PC-9 (cell line): ENCODE measurements at regions of chr18 and their contacts with region 1.

Region 1: GRCh38 chr18:12744103-12744502 is 41.3 kb downstream of the PSMG2 start:
- DNase-seq: peak in 1 of 2 experiments; percentile 54
- H3K4me3 ChIP-seq: no peak overlapping the region
- H3K27ac ChIP-seq: no peak overlapping the region
- H3K4me1 ChIP-seq: peaks cover 34% of the 10 kb centered on the region
- H3K27me3 ChIP-seq: no peaks in the 10 kb centered on the region
- CTCF ChIP-seq: peak; percentile 68

Region 2: DNA sequence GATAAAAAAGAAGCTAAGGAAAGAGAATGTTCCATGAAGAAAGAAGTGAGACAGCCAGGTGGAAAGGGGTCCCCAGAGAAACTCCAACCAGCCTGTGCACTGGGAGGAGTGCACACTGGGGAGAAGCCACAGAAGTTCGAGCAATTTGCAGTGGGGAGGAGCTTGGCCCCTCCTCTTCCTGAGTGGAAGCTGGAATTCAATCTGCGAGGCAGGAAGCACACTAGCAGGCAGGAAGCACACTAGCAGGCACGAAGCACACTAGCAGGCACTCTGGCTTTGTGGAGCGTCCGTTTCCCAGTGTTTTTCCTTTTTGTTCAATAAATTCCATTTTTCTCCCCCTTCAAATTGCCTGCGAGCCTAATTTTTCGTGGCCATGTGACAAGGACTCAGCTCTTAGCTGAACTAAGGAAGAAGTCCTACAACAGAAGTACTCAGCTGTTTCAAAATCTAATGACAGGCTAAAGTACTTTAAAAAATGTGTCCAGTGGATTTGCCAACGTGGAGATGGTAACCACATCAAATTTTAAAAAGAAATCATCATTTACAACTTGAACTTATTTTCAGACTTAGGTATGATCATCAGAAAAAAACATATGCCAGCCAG is 64.8 kb before region 1 on chr18:
- CTCF ChIA-PET with region 1: no interaction called
- POLR2A ChIA-PET with region 1: no interaction called
- intact Hi-C with region 1: no loop called
- DNase-seq: no peak
- H3K4me3 ChIP-seq: no peak overlapping the region
- H3K27ac ChIP-seq: no peak overlapping the region
- H3K4me1 ChIP-seq: no peaks in the 10 kb centered on the region
- H3K27me3 ChIP-seq: no peaks in the 10 kb centered on the region
- CTCF ChIP-seq: no peak

Region 3: DNA sequence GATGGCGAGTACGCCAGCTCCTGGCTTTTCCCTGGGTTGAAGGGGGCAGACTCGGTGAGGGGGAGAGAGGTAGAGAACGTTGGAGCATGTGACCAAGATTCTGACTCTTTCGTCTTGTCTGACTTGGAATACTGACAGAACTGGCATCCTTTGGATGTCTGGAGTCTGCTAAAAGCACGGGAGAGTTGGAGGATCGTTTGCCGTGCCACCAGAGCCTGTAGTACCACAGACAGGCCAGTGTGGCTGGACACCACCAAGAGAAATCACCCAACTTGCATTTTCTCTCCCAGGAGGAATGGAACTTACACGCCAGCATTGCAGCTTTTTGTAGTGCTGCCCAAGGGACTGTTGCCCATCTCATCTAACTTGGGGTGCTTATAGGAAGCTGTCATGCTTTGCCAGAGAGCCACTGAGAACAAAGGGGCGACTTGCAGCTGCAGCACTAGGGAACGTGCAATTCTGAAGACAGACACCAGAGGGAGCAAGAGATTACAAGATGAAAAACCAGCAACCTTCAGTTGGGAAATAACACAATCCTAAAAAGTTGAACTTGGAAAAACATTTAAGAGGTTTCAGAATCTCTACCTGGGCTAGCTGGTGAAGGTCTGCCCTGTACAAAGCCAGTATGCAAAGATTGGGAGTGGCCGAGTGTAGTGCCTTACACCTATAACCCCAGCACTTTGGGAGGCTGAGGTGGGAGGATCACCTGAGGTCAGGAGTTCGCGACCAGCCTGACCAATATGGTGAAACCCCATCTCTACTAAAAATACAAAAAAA is 17.1 kb before region 1 on chr18:
- CTCF ChIA-PET with region 1: no interaction called
- POLR2A ChIA-PET with region 1: no interaction called
- intact Hi-C with region 1: loop called (anchors 1 kb)
- DNase-seq: peak; percentile 46 to 68
- H3K4me3 ChIP-seq: no peak overlapping the region
- H3K27ac ChIP-seq: no peak overlapping the region
- H3K4me1 ChIP-seq: peaks cover 17% of the 10 kb centered on the region
- H3K27me3 ChIP-seq: no peaks in the 10 kb centered on the region
- CTCF ChIP-seq: peak; percentile 97

Region 4: GRCh38 chr18:12838178-12838634 is 94.1 kb after region 1 on chr18:
- CTCF ChIA-PET with region 1: no interaction called
- POLR2A ChIA-PET with region 1: no interaction called
- intact Hi-C with region 1: loop called (anchors 5 kb)
- DNase-seq: peak; percentile 92 to 99
- H3K4me3 ChIP-seq: peak overlapping the region; percentile 45; the same call in 1 of the 2 replicates
- H3K27ac ChIP-seq: peak overlapping the region; percentile 100
- H3K4me1 ChIP-seq: peaks cover 53% of the 10 kb centered on the region
- H3K27me3 ChIP-seq: no peaks in the 10 kb centered on the region
- CTCF ChIP-seq: no peak

Region 5: DNA sequence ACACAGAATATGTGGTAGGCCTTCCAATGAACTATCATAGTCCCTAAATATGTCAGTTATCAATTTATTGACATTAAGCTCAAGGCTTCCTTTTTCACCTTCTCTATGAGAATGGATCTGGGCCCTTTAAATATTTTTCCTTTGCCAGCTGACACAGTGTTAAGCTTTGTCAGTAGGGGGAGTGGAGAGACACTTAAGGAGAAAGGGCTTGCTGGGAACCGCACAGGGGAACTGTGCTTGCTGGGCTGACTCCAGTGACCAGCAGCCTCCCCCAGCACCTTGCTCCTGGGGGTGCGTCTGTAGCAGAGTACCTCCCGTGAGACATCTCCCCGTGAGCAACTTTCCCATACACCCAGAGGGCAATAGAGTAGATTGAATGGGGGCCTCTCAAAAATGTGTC is 146.4 kb after region 1 on chr18:
- CTCF ChIA-PET with region 1: interaction called, 13 read pairs
- POLR2A ChIA-PET with region 1: interaction called, 13 read pairs
- intact Hi-C with region 1: loop called (anchors 1 kb)
- DNase-seq: peak; percentile 22 to 59
- H3K4me3 ChIP-seq: peak overlapping the region; percentile 6; the same call in 1 of the 2 replicates
- H3K27ac ChIP-seq: peak overlapping the region; percentile 95
- H3K4me1 ChIP-seq: peaks cover 41% of the 10 kb centered on the region
- H3K27me3 ChIP-seq: no peaks in the 10 kb centered on the region
- CTCF ChIP-seq: peak; percentile 45; the same call in 1 of the 2 replicates

Region 6: DNA sequence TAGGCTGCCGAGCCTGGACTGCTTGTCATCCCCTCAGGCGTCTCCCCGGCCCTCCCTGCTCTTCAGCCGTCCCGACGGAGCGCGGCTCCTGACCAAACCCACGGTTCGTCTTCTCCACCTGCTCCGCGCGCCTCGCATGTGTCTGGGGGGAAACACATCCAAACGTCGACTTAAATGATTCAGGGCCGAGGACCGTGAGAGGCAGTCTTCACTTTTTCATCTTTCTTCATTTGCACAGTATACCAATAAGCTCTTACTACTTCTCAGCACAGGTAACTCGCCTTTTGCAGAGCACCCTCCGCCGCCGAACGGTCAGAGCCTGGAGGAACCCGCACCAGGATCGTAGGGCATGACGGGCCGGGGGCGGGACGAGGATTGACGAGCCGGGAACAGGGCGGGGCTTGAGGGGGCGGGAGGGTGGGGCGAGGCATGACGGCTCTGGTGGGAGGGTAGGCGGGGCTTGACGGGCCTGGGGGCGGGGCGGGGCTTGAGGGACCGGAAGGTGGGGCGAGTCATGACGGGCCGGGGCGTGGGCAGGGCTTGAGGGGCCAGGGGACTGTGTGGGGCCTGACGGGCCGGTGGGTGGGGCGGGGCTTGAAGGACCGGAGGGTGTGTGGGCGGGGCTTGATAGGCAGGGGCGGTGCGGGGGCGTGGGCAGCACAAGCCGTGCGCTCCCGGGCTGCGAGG is 203.4 kb after region 1 on chr18 and contains the start of gene SEH1L:
- CTCF ChIA-PET with region 1: no interaction called
- POLR2A ChIA-PET with region 1: no interaction called
- intact Hi-C with region 1: loop called (anchors 1 kb)
- DNase-seq: peak; percentile 81 to 98
- H3K4me3 ChIP-seq: peak within 1 kb of the TSS; percentile 98
- H3K27ac ChIP-seq: peak within 1 kb of the TSS; percentile 95
- H3K4me1 ChIP-seq: peaks cover 32% of the 10 kb centered on the region
- H3K27me3 ChIP-seq: no peaks in the 10 kb centered on the region
- CTCF ChIP-seq: no peak
- total RNA-seq, gene SEH1L: 98.3 and 101 TPM in 2 replicates

Region 7: GRCh38 chr18:13003466-13003896 is 259.4 kb after region 1 on chr18:
- CTCF ChIA-PET with region 1: no interaction called
- POLR2A ChIA-PET with region 1: interaction called, 11 read pairs
- intact Hi-C with region 1: no loop called
- DNase-seq: no peak
- H3K4me3 ChIP-seq: no peak overlapping the region
- H3K27ac ChIP-seq: no peak overlapping the region
- H3K4me1 ChIP-seq: no peaks in the 10 kb centered on the region
- H3K27me3 ChIP-seq: no peaks in the 10 kb centered on the region
- CTCF ChIP-seq: peak; percentile 53; the same call in 1 of the 2 replicates

Region 8: DNA sequence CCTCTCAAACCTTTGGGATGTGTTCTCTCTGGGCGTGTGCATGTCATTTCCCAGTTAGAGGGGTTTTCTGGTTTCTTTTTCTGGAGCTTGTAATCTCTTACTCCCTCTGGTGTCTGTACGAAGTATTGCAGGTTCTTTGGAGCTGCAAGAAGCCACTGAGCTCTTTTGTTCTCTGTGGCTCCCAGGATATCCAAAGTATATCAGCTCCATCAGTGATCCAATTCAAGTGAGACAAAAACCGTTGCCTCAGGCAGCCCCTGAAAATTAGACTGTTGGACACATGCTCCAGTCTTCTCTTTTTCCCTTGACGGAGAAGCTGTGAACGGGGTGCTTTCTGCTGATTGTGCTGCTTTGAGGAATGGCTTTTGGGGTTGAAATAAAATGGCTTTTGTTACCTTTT is 415.5 kb after region 1 on chr18:
- CTCF ChIA-PET with region 1: interaction called, 12 read pairs
- POLR2A ChIA-PET with region 1: no interaction called
- intact Hi-C with region 1: no loop called
- DNase-seq: peak in 1 of 2 experiments; percentile 39
- H3K4me3 ChIP-seq: no peak overlapping the region
- H3K27ac ChIP-seq: no peak overlapping the region
- H3K4me1 ChIP-seq: no peaks in the 10 kb centered on the region
- H3K27me3 ChIP-seq: peaks cover 17% of the 10 kb centered on the region; the same call in 1 of the 2 replicates
- CTCF ChIP-seq: peak; percentile 92

Region 9: GRCh38 chr18:13539050-13539449 is 794.9 kb after region 1 on chr18:
- CTCF ChIA-PET with region 1: no interaction called
- POLR2A ChIA-PET with region 1: no interaction called
- intact Hi-C with region 1: no loop called
- DNase-seq: no peak
- H3K4me3 ChIP-seq: no peak overlapping the region
- H3K27ac ChIP-seq: no peak overlapping the region
- H3K4me1 ChIP-seq: no peaks in the 10 kb centered on the region
- H3K27me3 ChIP-seq: peaks cover 97% of the 10 kb centered on the region
- CTCF ChIP-seq: no peak